WTC11 (cell line): ENCODE measurements at regions of chr22 and their contacts with region 1.

Region 1: DNA sequence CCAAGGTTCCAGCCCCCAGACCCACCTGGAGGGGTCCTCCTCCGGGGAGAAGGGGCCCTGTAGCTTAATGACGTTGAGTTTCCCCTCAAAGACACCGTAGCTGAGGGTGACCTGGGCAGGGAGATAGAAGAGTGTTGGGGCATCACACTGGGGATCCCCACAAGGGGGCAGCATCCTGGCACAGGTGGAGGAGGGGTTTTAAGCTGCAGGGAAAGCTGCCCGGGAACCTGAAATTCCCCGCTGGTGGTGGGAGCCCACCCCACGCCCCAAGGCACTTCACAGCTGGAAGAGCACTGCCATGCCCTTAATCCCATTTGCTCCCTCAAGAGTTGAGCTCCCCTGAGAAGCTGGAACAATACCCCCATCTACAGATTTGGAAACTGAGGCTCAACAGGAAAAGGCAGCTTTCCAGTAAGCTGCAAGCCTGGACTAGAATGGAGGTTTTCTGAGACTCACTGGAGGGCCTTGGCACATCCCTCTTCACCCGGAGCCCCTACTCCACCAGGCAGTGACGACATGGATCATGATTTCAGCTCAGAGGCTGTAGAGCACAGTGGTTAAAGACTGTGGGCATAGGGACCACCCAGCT is 13.7 kb downstream of the MFNG start:
- DNase-seq: peak; percentile 79
- ATAC-seq: peak; percentile 81
- H3K4me3 Mint-ChIP-seq: no peak overlapping the region
- H3K27ac Mint-ChIP-seq: no peak overlapping the region
- H3K4me1 Mint-ChIP-seq: 0 out of 2 replicates have a peak, but pooled peaks cover 3% of the 10 kb centered on the region
- H3K27me3 Mint-ChIP-seq: no peaks in the 10 kb centered on the region; the same call in 1 of the 2 replicates
- CTCF ChIP-seq: peak; percentile 66

Region 2: DNA sequence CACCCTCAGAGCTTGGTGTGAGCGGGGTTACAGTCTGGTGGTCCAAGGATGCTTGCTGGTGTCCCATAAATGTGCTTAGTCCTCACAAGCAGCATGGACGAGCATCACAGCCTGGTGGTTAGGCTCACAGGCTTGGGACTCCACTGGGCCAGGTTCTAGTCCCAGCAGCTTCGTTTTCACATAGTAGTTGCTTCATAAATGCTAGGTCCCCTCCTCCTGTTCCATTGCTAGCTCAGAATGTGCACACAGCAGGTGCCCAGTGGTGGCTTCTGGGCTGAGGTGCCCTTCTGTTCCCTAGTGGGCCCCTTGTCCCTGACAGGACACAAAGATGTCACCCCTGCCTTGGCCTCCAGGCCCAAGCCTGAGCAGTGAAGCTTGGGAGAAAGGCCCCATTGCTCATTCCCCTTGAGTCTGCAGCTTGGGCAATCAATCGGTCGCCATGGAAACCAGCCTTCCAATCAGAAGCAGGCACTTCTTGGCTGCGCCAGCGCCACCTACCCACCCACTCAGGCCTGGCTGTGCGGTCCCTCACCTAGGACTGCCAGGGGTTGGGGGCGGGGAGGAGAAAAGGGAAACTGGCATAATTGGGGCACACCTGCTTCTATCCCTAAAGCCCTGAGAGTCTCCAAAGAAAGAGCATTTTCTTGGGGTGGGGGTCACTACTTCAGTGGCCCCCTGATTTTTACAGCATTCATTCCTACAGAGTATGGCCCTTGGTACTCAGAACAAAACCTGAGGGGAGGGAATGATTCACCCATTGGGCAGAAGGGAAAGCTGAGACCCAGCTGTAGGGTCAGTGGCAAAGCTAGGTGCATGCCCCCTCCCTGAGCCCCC is 142.1 kb before region 1 on chr22:
- CTCF ChIA-PET with region 1: interaction called, 12 read pairs
- POLR2A ChIA-PET with region 1: no interaction called
- DNase-seq: peak; percentile 91
- ATAC-seq: peak; percentile 84
- H3K4me3 Mint-ChIP-seq: no peak overlapping the region
- H3K27ac Mint-ChIP-seq: no peak overlapping the region
- H3K4me1 Mint-ChIP-seq: peaks cover 29% of the 10 kb centered on the region
- H3K27me3 Mint-ChIP-seq: peaks cover 43% of the 10 kb centered on the region
- CTCF ChIP-seq: no peak

Region 3: DNA sequence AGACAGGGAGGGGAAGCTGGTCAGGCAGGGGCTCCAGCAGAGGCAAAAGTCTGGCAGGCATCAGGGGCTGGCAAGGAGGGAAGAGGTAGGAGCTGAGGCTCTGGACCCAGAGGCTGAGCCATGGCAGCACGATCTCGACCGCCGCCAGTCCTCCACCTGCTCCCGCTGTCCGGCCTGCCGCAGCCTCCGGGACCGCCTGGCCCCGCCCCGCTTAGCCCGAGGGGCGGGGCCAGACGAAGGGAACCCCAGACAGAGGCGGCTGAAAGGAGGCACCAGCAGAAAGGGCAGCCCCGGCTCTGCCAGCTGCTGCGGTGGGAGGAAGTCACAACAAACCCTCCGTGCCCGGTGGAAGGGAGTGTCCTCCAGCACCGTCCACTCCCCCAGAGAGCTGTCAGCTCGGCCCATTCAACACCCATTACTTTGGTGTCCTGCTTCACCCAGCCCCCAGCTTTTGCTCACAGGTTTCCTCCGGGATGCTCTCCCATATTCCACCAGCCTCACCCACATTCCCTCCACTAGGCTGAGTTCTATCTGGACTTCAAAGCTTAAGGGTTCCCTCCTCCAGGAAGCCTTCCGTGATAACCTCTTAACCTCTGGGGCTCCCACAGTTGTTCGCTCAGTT is 13.8 kb after region 1 on chr22 and contains the start of gene MFNG:
- CTCF ChIA-PET with region 1: interaction called, 175 read pairs
- POLR2A ChIA-PET with region 1: no interaction called
- DNase-seq: peak; percentile 75
- ATAC-seq: peak; percentile 92
- H3K4me3 Mint-ChIP-seq: peak within 1 kb of the TSS; percentile 56
- H3K27ac Mint-ChIP-seq: peak within 1 kb of the TSS; percentile 47
- H3K4me1 Mint-ChIP-seq: peaks cover 54% of the 10 kb centered on the region
- H3K27me3 Mint-ChIP-seq: no peaks in the 10 kb centered on the region
- CTCF ChIP-seq: no peak
- total RNA-seq, gene MFNG: 3.2 to 4.8 TPM (median 3.7 TPM) in 3 replicates

Region 4: DNA sequence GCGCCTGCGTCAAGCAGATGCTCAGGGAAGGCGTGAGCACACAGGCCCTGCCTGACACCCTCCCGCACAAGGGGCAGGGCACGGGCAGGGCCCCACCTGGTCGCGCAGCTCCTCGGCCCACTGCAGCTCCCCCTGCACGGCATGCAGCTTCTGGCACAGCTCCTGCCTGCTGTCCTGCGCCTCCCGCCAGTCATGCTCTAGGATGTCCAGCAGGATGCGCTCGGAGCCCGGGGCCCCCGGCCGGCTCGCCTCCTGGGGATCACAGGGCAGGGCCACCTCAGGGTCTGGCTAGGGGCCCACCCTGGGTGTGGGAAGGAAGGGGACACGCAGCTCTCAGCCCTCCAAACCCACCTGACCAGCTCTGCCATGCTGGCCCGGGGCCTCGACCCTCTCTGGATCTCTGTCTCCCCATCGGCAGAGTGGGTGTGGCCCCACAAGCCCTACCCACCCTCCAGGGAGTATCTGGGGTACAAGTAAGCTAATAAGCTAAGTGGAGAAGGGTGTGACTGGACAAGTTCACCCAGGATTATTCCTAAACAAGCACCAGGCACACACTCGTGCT is 36.0 kb after region 1 on chr22:
- CTCF ChIA-PET with region 1: interaction called, 16 read pairs
- POLR2A ChIA-PET with region 1: no interaction called
- DNase-seq: no peak
- ATAC-seq: peak; percentile 35
- H3K4me3 Mint-ChIP-seq: no peak overlapping the region
- H3K27ac Mint-ChIP-seq: no peak overlapping the region
- H3K4me1 Mint-ChIP-seq: peaks cover 8% of the 10 kb centered on the region
- H3K27me3 Mint-ChIP-seq: no peaks in the 10 kb centered on the region
- CTCF ChIP-seq: no peak

Region 5: GRCh38 chr22:37544955-37545699 is 72.6 kb after region 1 on chr22:
- CTCF ChIA-PET with region 1: interaction called, 17 read pairs
- POLR2A ChIA-PET with region 1: no interaction called
- DNase-seq: peak; percentile 92
- ATAC-seq: peak; percentile 74
- H3K4me3 Mint-ChIP-seq: peak overlapping the region; percentile 53
- H3K27ac Mint-ChIP-seq: peak overlapping the region; percentile 74; the same call in 1 of the 2 replicates
- H3K4me1 Mint-ChIP-seq: peaks cover 29% of the 10 kb centered on the region
- H3K27me3 Mint-ChIP-seq: no peaks in the 10 kb centered on the region; the same call in 1 of the 2 replicates
- CTCF ChIP-seq: peak; percentile 53; the same call in 1 of the 2 replicates